Left ventricle myocardium inferior (tissue), 1 donor: ENCODE measurements at regions of chr4 and their contacts with region 1.

Region 1: DNA sequence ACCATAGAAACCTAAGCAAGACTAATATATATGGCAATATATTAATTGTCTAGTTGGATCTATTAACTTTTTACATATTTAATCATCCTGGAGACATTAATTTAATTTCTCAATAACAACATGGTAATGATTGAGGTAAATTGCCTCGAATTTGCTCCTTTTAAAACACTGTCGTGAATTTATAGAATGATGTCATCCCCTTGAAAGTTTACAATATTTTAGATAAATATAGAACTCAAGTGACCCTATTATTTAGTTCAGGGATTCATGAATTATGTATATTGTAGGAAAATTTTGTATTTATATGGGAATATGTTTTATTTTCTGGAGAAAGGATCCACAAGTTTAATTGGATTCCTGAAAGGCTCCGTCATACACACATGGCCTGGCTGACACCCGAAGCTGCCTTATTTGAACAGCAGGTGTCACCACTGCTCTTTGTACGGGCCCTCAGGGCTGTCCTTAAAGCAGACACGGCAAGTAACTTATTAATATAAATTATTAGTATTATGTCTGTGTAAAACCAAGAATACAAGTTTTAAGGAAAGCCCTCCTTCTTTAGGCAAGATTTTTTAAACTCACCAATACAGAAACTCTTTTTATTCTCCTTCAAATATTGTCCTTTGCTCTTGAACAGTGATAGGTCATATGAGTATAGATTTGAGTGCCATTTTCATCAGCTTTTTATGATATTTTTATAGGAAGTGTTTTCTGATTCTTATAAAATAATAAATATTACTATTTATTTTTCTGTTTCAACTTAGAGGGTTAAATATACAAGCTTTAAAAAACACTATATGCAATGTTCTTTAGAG is 1.9 kb upstream of the PLRG1 start:
- DNase-seq: peak; percentile 55
- H3K4me3 ChIP-seq: no peak overlapping the region
- H3K27ac ChIP-seq: no peak overlapping the region
- H3K4me1 ChIP-seq: peaks cover 28% of the 10 kb centered on the region
- H3K27me3 ChIP-seq: no peaks in the 10 kb centered on the region
- CTCF ChIP-seq: peak; percentile 90

Region 2: DNA sequence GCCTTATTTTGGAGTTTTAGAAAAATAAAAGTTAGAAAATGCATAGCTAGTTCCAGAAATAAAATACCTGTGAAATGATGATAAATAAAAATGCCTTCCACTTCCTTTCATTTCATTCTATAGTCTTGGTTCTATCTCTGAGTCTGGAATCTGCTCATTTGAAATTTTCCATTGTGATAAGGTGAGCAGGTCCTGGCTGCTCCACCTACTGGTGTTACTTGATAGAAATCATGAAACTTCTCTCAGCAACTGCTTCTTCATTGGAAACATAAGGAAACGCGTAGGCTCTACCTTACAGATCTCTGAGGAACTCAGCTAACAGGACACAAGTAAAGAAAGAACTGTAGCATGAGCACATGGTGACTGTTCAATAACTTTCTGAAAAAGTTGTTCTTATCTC is 202.2 kb before region 1 on chr4:
- intact Hi-C with region 1: no loop called
- DNase-seq: no peak
- H3K4me3 ChIP-seq: no peak overlapping the region
- H3K27ac ChIP-seq: no peak overlapping the region
- H3K4me1 ChIP-seq: no peaks in the 10 kb centered on the region
- H3K27me3 ChIP-seq: peaks cover 2% of the 10 kb centered on the region
- CTCF ChIP-seq: no peak

Region 3: DNA sequence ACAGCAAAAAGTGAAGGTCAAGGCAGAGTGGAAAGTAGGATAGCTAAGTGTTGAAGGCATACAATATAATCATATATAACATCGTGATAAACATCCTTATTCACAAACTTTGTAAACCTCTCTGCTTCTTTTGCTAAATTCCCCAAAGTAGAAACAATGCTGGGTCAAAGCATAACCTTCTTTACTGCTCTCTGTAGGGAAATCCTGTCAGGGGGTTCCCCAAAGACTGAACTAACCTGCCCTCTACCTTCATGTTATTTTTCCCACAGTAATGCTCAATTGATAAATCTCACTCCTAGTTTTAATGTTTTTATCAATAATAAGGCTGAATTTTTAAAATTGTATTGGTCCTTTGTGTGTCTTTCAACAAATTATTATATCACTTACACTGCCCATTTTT is 116.2 kb before region 1 on chr4:
- intact Hi-C with region 1: no loop called
- DNase-seq: no peak
- H3K4me3 ChIP-seq: no peak overlapping the region
- H3K27ac ChIP-seq: no peak overlapping the region
- H3K4me1 ChIP-seq: no peaks in the 10 kb centered on the region
- H3K27me3 ChIP-seq: no peaks in the 10 kb centered on the region
- CTCF ChIP-seq: no peak

Region 4: DNA sequence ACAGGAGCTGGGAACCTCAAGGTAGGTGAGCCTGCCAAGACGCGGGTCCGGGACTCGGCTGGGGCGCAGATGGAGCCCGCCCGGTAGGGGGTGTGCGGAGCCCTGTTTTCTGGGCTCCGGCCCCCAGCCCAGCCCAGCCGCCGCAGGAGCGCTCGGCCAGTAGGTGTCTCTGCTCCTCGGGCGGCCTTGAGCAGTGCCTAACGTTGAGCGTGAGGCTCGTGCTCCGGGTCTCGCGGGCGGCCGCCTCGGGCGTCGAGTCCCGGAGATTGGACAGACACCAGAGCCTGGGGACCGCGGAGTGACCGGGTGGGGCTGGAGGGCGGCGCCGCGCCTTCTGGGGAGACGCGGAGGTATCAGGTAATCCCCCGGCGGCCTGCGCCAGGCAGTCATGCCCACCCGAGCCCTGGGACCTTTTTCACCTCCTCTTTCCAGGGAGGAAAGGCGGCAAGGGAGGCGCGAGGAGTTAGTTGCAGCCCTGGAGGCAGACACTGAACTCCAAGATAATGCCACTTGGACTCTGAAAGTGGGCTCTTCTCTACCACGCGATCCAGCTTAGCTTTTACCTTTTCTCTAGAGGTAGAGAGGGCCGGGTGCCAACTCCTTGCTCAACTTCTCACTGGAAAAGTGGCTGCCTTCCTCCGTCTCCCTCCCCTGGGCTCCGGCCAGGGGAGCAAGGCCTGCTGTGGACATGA is 74.9 kb after region 1 on chr4:
- intact Hi-C with region 1: loop called (anchors 10 kb)
- DNase-seq: peak; percentile 23
- H3K4me3 ChIP-seq: peak overlapping the region; percentile 54
- H3K27ac ChIP-seq: no peak overlapping the region
- H3K4me1 ChIP-seq: peaks cover 8% of the 10 kb centered on the region
- H3K27me3 ChIP-seq: peaks cover 68% of the 10 kb centered on the region
- CTCF ChIP-seq: peak; percentile 51

Region 5: GRCh38 chr4:154779362-154779947 is 227.4 kb after region 1 on chr4:
- intact Hi-C with region 1: loop called (anchors 10 kb)
- DNase-seq: no peak
- H3K4me3 ChIP-seq: no peak overlapping the region
- H3K27ac ChIP-seq: no peak overlapping the region
- H3K4me1 ChIP-seq: no peaks in the 10 kb centered on the region
- H3K27me3 ChIP-seq: peaks cover 40% of the 10 kb centered on the region
- CTCF ChIP-seq: peak; percentile 49

Region 6: DNA sequence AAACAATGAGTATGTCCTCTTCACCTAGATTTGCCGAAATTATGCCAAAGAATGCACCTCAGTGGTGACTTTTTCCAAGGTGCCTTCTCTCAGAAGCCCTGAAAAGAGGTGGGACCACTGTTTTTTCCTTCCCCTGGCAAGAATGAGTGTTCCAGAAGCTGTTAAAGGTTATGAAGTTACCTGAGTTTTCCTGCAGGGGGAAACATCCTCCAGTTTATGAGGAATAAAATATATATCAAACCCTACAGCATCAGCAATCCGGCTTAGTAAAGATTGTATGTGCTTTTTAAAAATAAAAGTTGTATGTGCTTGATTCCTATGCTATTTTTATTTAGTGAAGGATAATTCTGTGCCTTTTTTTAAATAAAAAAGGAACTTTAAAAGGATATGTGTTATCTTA is 302.3 kb after region 1 on chr4:
- intact Hi-C with region 1: no loop called
- DNase-seq: no peak
- H3K4me3 ChIP-seq: no peak overlapping the region
- H3K27ac ChIP-seq: no peak overlapping the region
- H3K4me1 ChIP-seq: no peaks in the 10 kb centered on the region
- H3K27me3 ChIP-seq: no peaks in the 10 kb centered on the region
- CTCF ChIP-seq: peak; percentile 49

Region 7: DNA sequence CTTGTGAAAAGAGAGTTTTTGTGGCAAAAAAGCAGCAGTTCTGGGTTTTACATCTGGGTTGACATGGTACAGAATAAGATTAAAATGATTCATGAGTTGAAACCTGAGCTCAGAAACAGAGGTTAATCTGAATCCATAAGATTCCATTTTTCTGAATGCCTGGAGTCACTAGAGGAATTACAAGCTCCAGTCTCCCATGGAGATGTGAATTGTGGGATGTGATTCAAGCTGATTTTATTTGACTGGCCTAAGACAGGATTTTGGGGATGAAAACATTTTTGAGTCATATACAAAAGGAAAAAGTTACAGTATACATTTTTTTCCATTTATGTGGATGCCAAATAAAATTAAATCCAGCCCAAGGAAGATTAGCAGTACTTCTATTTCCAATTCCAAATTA is 390.1 kb after region 1 on chr4:
- intact Hi-C with region 1: no loop called
- DNase-seq: no peak
- H3K4me3 ChIP-seq: no peak overlapping the region
- H3K27ac ChIP-seq: no peak overlapping the region
- H3K4me1 ChIP-seq: no peaks in the 10 kb centered on the region
- H3K27me3 ChIP-seq: no peaks in the 10 kb centered on the region
- CTCF ChIP-seq: no peak